Activated T-helper 2 cell treated with anti-CD3 and anti-CD28 coated beads, Interferon-gamma antibody, Interleukin-2, Interleukin-4, amounts not matched to agents 10 μg/mL and 5 μg/mL and 100 μg/mL, durations not matched to agents 14 hours and 24 hours and 36 hours (primary cell): ENCODE measurements at regions of chr1 and their contacts with region 1.

Region 1: GRCh38 chr1:171644805-171645483 is 7.5 kb downstream of the MYOC start:
- DNase-seq: peak; percentile 67
- H3K4me3 Mint-ChIP-seq: no peak overlapping the region
- H3K27ac Mint-ChIP-seq: no peak overlapping the region
- H3K4me1 Mint-ChIP-seq: peaks cover 8% of the 10 kb centered on the region
- H3K27me3 Mint-ChIP-seq: peaks cover 4% of the 10 kb centered on the region

Region 2: GRCh38 chr1:171772312-171772711 is 127.4 kb after region 1 on chr1:
- intact Hi-C with region 1: loop called (anchors 10 kb)
- DNase-seq: no peak
- H3K4me3 Mint-ChIP-seq: no peak overlapping the region
- H3K27ac Mint-ChIP-seq: no peak overlapping the region
- H3K4me1 Mint-ChIP-seq: peaks cover under 1% of the 10 kb centered on the region
- H3K27me3 Mint-ChIP-seq: peaks cover 19% of the 10 kb centered on the region